ENCODE measurements at regions of chr1 and their contacts with region 1.

Region 1: GRCh38 chr1:27284425-27285273 is 37.3 kb upstream of the TMEM222 start:
- DNase-seq: peak; percentile 28
- ATAC-seq: peak; percentile 98
- H3K4me3 ChIP-seq: no peak overlapping the region
- H3K27ac ChIP-seq: no peak overlapping the region
- H3K4me1 ChIP-seq: no peaks in the 10 kb centered on the region
- H3K27me3 ChIP-seq: no peaks in the 10 kb centered on the region
- CTCF ChIP-seq: peak; percentile 79 to 84 (median 82)
- EP300 ChIP-seq: no peak
- POLR2A ChIP-seq: no peak
- RAD21 ChIP-seq: peak; percentile 84

Region 2: GRCh38 chr1:27097484-27097917 is 187.1 kb before region 1 on chr1:
- CTCF ChIA-PET with region 1: interaction called, 150 read pairs
- POLR2A ChIA-PET with region 1: interaction called, 3 read pairs
- RAD21 ChIA-PET with region 1: interaction called, 54 read pairs
- SMC1A ChIA-PET with region 1: interaction called, 10 read pairs
- in situ Hi-C with region 1: loop called (anchors 5 kb)
- intact Hi-C with region 1: loop called (anchors 1 kb)
- DNase-seq: no peak
- ATAC-seq: peak; percentile 78
- H3K4me3 ChIP-seq: no peak overlapping the region
- H3K27ac ChIP-seq: no peak overlapping the region
- H3K4me1 ChIP-seq: peaks cover 14% of the 10 kb centered on the region
- H3K27me3 ChIP-seq: no peaks in the 10 kb centered on the region
- CTCF ChIP-seq: peak; percentile 94 to 97 (median 94)
- EP300 ChIP-seq: no peak
- POLR2A ChIP-seq: no peak
- RAD21 ChIP-seq: peak; percentile 81

Region 3: GRCh38 chr1:27111626-27112573 is 172.7 kb before region 1 on chr1:
- CTCF ChIA-PET with region 1: interaction called, 150 read pairs
- POLR2A ChIA-PET with region 1: no interaction called
- RAD21 ChIA-PET with region 1: interaction called, 21 read pairs
- SMC1A ChIA-PET with region 1: interaction called, 12 read pairs
- in situ Hi-C with region 1: no loop called
- intact Hi-C with region 1: no loop called
- DNase-seq: no peak
- ATAC-seq: peak; percentile 98
- H3K4me3 ChIP-seq: no peak overlapping the region
- H3K27ac ChIP-seq: peak overlapping the region; percentile 80
- H3K4me1 ChIP-seq: peaks cover 13% of the 10 kb centered on the region
- H3K27me3 ChIP-seq: no peaks in the 10 kb centered on the region
- CTCF ChIP-seq: peak; percentile 36 to 63 (median 53); a peak in 4 of 6 replicates
- EP300 ChIP-seq: no peak
- POLR2A ChIP-seq: peak; percentile 49
- RAD21 ChIP-seq: peak; percentile 75

Region 4: DNA sequence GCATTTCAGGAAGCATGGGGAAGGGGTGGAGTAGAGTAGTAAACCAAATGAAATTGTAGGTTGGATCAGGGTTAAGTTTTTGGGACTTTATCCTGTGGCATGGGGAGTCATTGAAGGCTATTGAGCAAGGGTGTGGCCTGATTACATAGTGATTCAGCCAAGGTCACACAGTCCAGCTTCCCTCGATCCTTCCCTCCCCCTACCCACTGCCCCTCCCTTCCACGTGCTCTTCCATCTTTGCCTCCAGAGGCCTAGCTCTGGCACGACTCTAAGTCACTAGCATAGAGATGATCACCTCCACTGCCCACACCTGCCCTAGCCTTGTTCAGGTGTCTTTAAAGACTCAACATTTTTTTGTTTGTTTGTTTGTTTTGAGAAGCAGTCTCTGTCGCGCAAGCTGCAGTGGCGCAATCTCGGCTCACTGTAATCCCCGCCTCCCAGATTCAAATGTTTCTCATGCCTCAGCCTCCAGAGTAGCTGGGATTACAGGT is 92.6 kb before region 1 on chr1:
- CTCF ChIA-PET with region 1: interaction called, 108 read pairs
- POLR2A ChIA-PET with region 1: no interaction called
- RAD21 ChIA-PET with region 1: interaction called, 25 read pairs
- SMC1A ChIA-PET with region 1: interaction called, 66 read pairs
- in situ Hi-C with region 1: loop called (anchors 5 kb)
- intact Hi-C with region 1: no loop called
- DNase-seq: no peak
- ATAC-seq: no peak
- H3K4me3 ChIP-seq: no peak overlapping the region
- H3K27ac ChIP-seq: no peak overlapping the region
- H3K4me1 ChIP-seq: no peaks in the 10 kb centered on the region
- H3K27me3 ChIP-seq: no peaks in the 10 kb centered on the region; a peak in 1 of 4 replicates
- CTCF ChIP-seq: no peak
- EP300 ChIP-seq: no peak
- POLR2A ChIP-seq: no peak
- RAD21 ChIP-seq: no peak

Region 5: GRCh38 chr1:27225621-27226020 is 59.0 kb before region 1 on chr1:
- CTCF ChIA-PET with region 1: interaction called, 7 read pairs
- POLR2A ChIA-PET with region 1: no interaction called
- RAD21 ChIA-PET with region 1: interaction called, 5 read pairs
- SMC1A ChIA-PET with region 1: interaction called, 11 read pairs
- in situ Hi-C with region 1: no loop called
- intact Hi-C with region 1: no loop called
- DNase-seq: no peak
- ATAC-seq: no peak
- H3K4me3 ChIP-seq: no peak overlapping the region
- H3K27ac ChIP-seq: no peak overlapping the region
- H3K4me1 ChIP-seq: no peaks in the 10 kb centered on the region
- H3K27me3 ChIP-seq: no peaks in the 10 kb centered on the region
- CTCF ChIP-seq: no peak
- EP300 ChIP-seq: no peak
- POLR2A ChIP-seq: no peak
- RAD21 ChIP-seq: no peak

Region 6: DNA sequence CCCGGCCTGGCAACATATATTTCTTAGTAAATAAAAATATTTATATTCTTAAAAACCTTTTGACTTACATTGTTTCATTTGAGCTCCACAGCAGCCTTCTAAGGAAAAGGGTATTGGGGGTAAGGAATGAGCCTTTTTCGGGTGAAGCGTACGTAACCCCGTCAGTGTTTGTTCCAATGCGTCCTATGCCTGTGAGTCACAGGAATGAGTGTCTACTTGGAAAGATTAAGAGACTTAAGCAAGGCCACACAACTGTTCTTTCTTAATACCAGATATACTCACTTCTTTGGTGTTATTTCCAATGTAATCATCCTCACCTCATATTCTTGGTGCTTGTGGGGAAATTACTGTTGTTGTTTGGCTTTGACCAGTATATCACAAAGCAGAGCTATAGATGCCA is 27.5 kb before region 1 on chr1:
- CTCF ChIA-PET with region 1: interaction called, 8 read pairs
- POLR2A ChIA-PET with region 1: no interaction called
- RAD21 ChIA-PET with region 1: interaction called, 6 read pairs
- SMC1A ChIA-PET with region 1: interaction called, 10 read pairs
- in situ Hi-C with region 1: no loop called
- intact Hi-C with region 1: no loop called
- DNase-seq: no peak
- ATAC-seq: no peak
- H3K4me3 ChIP-seq: no peak overlapping the region
- H3K27ac ChIP-seq: no peak overlapping the region
- H3K4me1 ChIP-seq: peaks cover 26% of the 10 kb centered on the region
- H3K27me3 ChIP-seq: no peaks in the 10 kb centered on the region
- CTCF ChIP-seq: no peak
- EP300 ChIP-seq: no peak
- POLR2A ChIP-seq: no peak
- RAD21 ChIP-seq: no peak

Measured in GM12878 (cell line).